Activated CD8-positive, alpha-beta T cell treated with anti-CD3 and anti-CD28 coated beads for 36 hours (primary cell): ENCODE measurements at regions of chr11 and their contacts with region 1.

Region 1: DNA sequence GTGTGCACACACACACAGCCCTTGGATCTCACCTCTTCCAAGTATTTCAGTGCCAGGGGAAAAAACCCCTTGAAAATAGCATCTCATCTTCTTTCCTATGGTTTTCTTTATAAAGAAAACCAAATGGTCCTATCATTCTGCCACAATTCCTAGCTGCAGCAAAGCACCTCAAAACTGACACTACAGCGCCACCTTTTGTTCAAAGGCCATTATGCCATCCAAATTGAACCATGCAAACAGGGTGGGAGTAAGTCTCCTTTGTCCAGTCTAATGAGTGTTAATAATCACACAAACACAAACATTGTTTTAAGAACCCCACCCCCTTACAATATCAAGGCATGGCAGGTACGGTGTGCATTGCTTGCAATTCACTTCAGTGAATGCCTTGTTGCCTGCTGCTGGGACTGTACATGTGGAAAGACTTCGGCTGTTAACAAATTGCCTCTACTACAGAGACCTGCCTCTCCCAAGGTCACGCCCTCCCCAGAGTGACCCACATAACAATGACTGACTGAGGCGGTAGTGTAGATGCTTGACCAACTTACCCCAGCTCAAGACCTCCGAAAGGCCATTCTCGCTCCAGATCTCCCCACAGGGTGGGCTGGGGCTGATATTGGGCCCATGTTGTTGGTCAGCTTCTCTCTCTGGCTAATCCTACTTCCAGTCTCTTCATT is 31.7 kb downstream of the FAM181B start:
- DNase-seq: peak; percentile 42
- ATAC-seq: peak; percentile 55
- H3K4me3 Mint-ChIP-seq: no peak overlapping the region
- H3K27ac Mint-ChIP-seq: no peak overlapping the region
- H3K4me1 Mint-ChIP-seq: no peaks in the 10 kb centered on the region
- H3K27me3 Mint-ChIP-seq: peaks cover 8% of the 10 kb centered on the region
- CTCF ChIP-seq: peak; percentile 71

Region 2: GRCh38 chr11:81644239-81644840 is 1057.6 kb before region 1 on chr11:
- CTCF ChIA-PET with region 1: no interaction called
- POLR2A ChIA-PET with region 1: no interaction called
- intact Hi-C with region 1: loop called (anchors 5 kb)
- DNase-seq: peak; percentile 16
- ATAC-seq: peak; percentile 62
- H3K4me3 Mint-ChIP-seq: no peak overlapping the region
- H3K27ac Mint-ChIP-seq: no peak overlapping the region
- H3K4me1 Mint-ChIP-seq: no peaks in the 10 kb centered on the region
- H3K27me3 Mint-ChIP-seq: peaks cover 17% of the 10 kb centered on the region
- CTCF ChIP-seq: peak; percentile 65

Region 3: GRCh38 chr11:82682003-82682751 is 19.8 kb before region 1 on chr11:
- CTCF ChIA-PET with region 1: interaction called, 17 read pairs
- POLR2A ChIA-PET with region 1: no interaction called
- intact Hi-C with region 1: no loop called
- DNase-seq: peak; percentile 12
- ATAC-seq: peak; percentile 69
- H3K4me3 Mint-ChIP-seq: no peak overlapping the region
- H3K27ac Mint-ChIP-seq: no peak overlapping the region
- H3K4me1 Mint-ChIP-seq: no peaks in the 10 kb centered on the region
- H3K27me3 Mint-ChIP-seq: peaks cover 14% of the 10 kb centered on the region
- CTCF ChIP-seq: peak; percentile 66

Region 4: GRCh38 chr11:82738091-82738490 is 36.1 kb after region 1 on chr11:
- CTCF ChIA-PET with region 1: no interaction called
- POLR2A ChIA-PET with region 1: no interaction called
- intact Hi-C with region 1: no loop called
- DNase-seq: no peak
- ATAC-seq: no peak
- H3K4me3 Mint-ChIP-seq: no peak overlapping the region
- H3K27ac Mint-ChIP-seq: no peak overlapping the region
- H3K4me1 Mint-ChIP-seq: no peaks in the 10 kb centered on the region
- H3K27me3 Mint-ChIP-seq: peaks cover 30% of the 10 kb centered on the region
- CTCF ChIP-seq: no peak

Region 5: GRCh38 chr11:82823647-82824619 is 121.9 kb after region 1 on chr11:
- CTCF ChIA-PET with region 1: no interaction called
- POLR2A ChIA-PET with region 1: no interaction called
- intact Hi-C with region 1: no loop called
- DNase-seq: no peak
- ATAC-seq: no peak
- H3K4me3 Mint-ChIP-seq: no peak overlapping the region
- H3K27ac Mint-ChIP-seq: no peak overlapping the region
- H3K4me1 Mint-ChIP-seq: no peaks in the 10 kb centered on the region
- H3K27me3 Mint-ChIP-seq: no peaks in the 10 kb centered on the region
- CTCF ChIP-seq: no peak